ENCODE measurements at regions of chr5 and their contacts with region 1.

Region 1: GRCh38 chr5:127564002-127564769 is 46.7 kb downstream of the PRRC1 start:
- DNase-seq: peak; percentile 67
- H3K4me3 ChIP-seq: no peak overlapping the region
- H3K27ac ChIP-seq: no peak overlapping the region
- H3K4me1 ChIP-seq: no peaks in the 10 kb centered on the region
- H3K27me3 ChIP-seq: peaks cover 21 to 25% of the 10 kb centered on the region in 2 experiments
- CTCF ChIP-seq: peak; percentile 49 to 57
- POLR2A ChIP-seq: no peak

Region 2: DNA sequence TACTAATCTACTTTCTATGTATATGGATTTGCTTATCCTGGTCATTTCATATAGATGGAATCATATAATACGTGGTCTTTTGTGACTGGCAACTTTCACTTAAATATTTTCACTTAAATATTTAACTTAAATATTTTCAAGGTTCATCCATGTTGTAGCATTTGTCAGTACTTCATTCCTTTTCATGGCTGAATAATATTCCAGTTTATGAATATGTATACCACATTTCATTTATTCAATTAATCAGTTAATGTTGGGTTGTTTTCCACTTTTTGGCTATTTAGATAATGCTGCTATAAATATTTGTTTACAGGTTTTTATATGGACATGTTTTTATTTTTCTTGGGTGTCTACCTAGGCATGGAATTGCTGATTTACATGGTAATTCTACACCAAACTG is 39.0 kb before region 1 on chr5:
- CTCF ChIA-PET with region 1: no interaction called
- POLR2A ChIA-PET with region 1: no interaction called
- dilution Hi-C with region 1: no loop called
- intact Hi-C with region 1: no loop called
- DNase-seq: no peak
- H3K4me3 ChIP-seq: no peak overlapping the region
- H3K27ac ChIP-seq: no peak overlapping the region
- H3K4me1 ChIP-seq: no peaks in the 10 kb centered on the region
- H3K27me3 ChIP-seq: no peaks in the 10 kb centered on the region
- CTCF ChIP-seq: no peak
- POLR2A ChIP-seq: no peak

Region 3: DNA sequence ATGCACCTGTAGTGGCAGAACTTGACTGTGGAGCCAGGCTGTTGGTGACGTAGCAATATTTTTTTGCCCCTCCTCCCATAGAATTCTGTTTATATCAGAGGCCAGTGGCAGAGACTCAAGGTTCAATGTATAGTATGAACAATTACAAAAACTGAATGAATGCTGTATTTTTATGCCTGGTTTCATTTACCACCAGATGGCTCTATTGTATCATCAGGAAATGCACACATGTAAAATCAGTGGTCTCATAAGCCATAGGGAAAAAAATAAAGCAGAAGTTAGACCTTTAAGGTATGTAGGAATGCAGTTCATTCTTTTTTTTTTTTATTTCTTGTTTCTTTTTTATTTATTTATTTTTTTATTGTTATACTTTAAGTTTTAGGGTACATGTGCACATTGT is 182.6 kb after region 1 on chr5:
- CTCF ChIA-PET with region 1: no interaction called
- POLR2A ChIA-PET with region 1: no interaction called
- dilution Hi-C with region 1: no loop called
- intact Hi-C with region 1: loop called (anchors 2 kb)
- DNase-seq: peak; percentile 27
- H3K4me3 ChIP-seq: no peak overlapping the region
- H3K27ac ChIP-seq: no peak overlapping the region
- H3K4me1 ChIP-seq: no peaks in the 10 kb centered on the region
- H3K27me3 ChIP-seq: peaks cover 7 to 9% of the 10 kb centered on the region in 2 experiments
- CTCF ChIP-seq: peak; percentile 21 to 29
- POLR2A ChIP-seq: no peak

Region 4: DNA sequence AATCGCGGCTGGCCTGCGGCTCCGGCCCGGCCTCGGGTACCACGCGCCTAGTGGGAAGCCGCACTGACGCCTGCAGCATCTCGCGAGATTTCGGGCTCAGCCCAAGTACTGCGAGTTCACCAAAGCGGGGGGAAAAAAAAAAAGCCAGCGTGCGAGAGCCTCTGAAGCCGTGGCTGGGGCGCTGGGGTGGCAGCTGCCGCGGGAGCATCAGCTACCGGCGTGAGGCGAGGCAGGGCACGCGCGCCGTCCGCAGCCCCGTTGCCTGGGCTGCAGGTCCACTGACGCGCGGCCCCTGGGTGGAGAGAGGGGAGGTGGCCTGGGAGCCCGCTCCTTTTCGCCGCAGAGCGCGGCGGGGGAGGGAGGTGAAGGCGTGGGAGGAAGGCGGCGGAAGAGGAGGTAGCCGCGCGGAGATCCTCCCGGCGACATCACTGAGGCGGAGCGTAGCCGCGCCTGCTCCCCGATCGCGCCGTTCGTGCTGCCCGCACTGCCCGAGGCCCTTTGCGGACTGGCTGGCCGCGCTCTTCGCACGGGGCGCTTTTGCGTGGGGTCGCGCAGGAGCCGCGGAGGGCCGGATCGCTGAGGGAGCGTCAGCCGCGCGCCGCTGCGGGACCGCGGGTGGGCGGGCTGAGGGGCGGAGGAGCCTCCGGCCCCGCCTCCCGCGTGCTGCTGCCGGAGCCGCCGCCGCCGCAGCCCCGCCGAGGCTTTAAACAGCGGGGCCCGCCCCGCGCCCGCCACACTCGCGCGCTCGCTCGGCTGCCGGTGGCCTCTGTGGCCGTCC is 519.0 kb after region 1 on chr5 and contains the start of gene SLC12A2:
- CTCF ChIA-PET with region 1: no interaction called
- POLR2A ChIA-PET with region 1: no interaction called
- dilution Hi-C with region 1: no loop called
- intact Hi-C with region 1: loop called (anchors 2 kb)
- DNase-seq: peak; percentile 93
- H3K4me3 ChIP-seq: peak within 1 kb of the TSS; percentile 32 to 94 (median 85)
- H3K27ac ChIP-seq: peak within 1 kb of the TSS; percentile 76
- H3K4me1 ChIP-seq: peaks cover 25% of the 10 kb centered on the region
- H3K27me3 ChIP-seq: no peaks in the 10 kb centered on the region
- CTCF ChIP-seq: no peak
- POLR2A ChIP-seq: peak; percentile 89
- total RNA-seq, gene SLC12A2: 41.7 and 59.5 TPM in 2 replicates

Region 5: DNA sequence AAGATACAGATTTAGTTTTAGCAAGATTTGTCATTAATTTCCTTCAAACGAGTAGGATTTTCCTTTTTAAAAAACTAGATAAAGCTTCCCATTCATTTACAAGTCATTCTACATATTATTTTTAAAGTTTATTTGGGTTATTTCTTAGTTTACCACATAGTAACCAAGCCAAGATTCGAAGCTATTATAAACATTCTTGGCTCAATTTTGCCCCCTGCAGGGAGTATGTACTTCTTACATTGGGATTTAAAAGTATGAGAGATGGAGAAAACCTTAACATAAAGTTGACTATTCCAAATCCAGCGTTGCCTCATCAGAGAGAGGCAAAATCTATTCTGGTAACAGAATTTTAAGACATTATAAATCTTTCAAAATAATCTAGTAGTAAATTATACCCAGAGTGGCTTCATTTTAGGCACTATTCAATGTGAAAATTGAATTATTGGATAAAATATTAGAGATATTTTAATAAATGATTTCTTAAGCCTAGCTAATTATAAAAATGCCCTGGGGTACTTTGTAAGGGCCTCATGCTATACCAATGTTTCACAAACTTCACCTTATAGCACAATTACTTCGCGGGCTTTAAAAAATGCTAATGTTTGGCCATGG is 934.8 kb after region 1 on chr5:
- CTCF ChIA-PET with region 1: interaction called, 23 read pairs
- POLR2A ChIA-PET with region 1: no interaction called
- dilution Hi-C with region 1: no loop called
- intact Hi-C with region 1: loop called (anchors 1 kb)
- DNase-seq: peak; percentile 60
- H3K4me3 ChIP-seq: no peak overlapping the region
- H3K27ac ChIP-seq: no peak overlapping the region
- H3K4me1 ChIP-seq: no peaks in the 10 kb centered on the region
- H3K27me3 ChIP-seq: no peaks in the 10 kb centered on the region
- CTCF ChIP-seq: peak in 1 of 2 donors; percentile 15
- POLR2A ChIP-seq: no peak

Region 6: GRCh38 chr5:128844354-128844923 is 1280.3 kb after region 1 on chr5:
- CTCF ChIA-PET with region 1: interaction called, 11 read pairs
- POLR2A ChIA-PET with region 1: no interaction called
- dilution Hi-C with region 1: no loop called
- intact Hi-C with region 1: loop called (anchors 5 kb)
- DNase-seq: peak; percentile 53
- H3K4me3 ChIP-seq: no peak overlapping the region
- H3K27ac ChIP-seq: no peak overlapping the region
- H3K4me1 ChIP-seq: no peaks in the 10 kb centered on the region
- H3K27me3 ChIP-seq: no peaks in the 10 kb centered on the region
- CTCF ChIP-seq: peak in 1 of 2 donors; percentile 1
- POLR2A ChIP-seq: no peak

Measured in endothelial cell of umbilical vein (primary cell).